ENCODE measurements at regions of chr10 and their contacts with region 1.

Region 1: GRCh38 chr10:115129752-115130151 is 36.6 kb downstream of the ATRNL1 start:
- DNase-seq: no peak
- ATAC-seq: no peak
- H3K4me3 ChIP-seq: no peak overlapping the region
- H3K27ac ChIP-seq: no peak overlapping the region
- H3K4me1 ChIP-seq: no peaks in the 10 kb centered on the region
- H3K27me3 ChIP-seq: no peaks in the 10 kb centered on the region
- CTCF ChIP-seq: peak in 6 of 7 experiments; percentile 34 to 56 (median 50)
- POLR2A ChIP-seq: no peak

Region 2: GRCh38 chr10:114876602-114877300 is 253.0 kb before region 1 on chr10:
- intact Hi-C with region 1: loop called (anchors 5 kb)
- DNase-seq: peak; percentile 66 to 79 (median 70)
- ATAC-seq: peak; percentile 80
- H3K4me3 ChIP-seq: no peak overlapping the region
- H3K27ac ChIP-seq: no peak overlapping the region
- H3K4me1 ChIP-seq: peaks cover 8% of the 10 kb centered on the region
- H3K27me3 ChIP-seq: no peaks in the 10 kb centered on the region
- CTCF ChIP-seq: peak; percentile 37 to 79 (median 75)
- POLR2A ChIP-seq: no peak

Region 3: DNA sequence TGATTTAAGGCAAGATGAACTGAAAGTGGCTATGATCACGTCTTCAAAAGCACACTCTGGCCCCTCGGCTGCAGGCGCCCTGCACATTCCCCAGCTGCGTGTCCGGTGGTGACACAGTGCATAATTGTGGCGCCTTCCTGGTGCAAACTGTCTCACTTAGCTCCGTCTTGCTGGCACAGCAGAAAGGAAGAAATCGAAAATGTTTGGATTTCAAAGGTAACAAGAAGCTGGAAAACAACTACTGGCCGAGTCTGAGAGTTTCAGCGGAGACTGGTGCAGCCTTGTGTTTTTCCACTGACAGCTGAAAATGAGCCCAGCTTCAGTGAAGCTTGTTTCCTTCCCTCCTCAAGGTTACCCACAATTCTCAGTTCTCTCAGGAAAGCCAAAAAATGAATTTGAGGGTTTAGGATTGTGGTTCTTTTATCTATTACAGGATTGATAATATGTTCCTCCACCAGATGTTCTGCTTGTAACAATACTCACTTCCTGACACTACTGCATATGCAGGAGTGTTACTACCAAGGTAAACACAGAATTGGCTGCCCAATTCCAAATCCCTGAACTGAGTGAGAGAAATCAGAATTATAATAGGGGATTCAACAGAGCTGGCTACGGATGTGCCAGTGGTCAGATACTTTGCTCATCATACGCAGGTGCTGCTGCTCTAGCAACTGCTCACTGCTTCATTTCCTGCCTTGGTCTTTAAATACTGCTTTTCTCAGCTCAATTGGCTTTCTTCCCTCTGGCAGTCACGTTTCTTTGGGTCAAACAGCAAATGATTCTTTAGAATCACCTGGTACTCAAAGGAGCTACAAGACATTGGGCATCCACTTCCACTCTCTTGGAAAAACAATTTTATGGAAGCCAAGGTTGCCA is 128.0 kb before region 1 on chr10:
- intact Hi-C with region 1: no loop called
- DNase-seq: peak in 3 of 4 donors; percentile 9 to 40 (median 19)
- ATAC-seq: peak; percentile 68
- H3K4me3 ChIP-seq: no peak overlapping the region
- H3K27ac ChIP-seq: no peak overlapping the region
- H3K4me1 ChIP-seq: no peaks in the 10 kb centered on the region
- H3K27me3 ChIP-seq: no peaks in the 10 kb centered on the region
- CTCF ChIP-seq: no peak
- POLR2A ChIP-seq: no peak